HCT116 (cell line): ENCODE measurements at regions of chr18 and their contacts with region 1.

Region 1: GRCh38 chr18:45974088-45974536 is 7.0 kb upstream of the EPG5 start:
- DNase-seq: peak; percentile 63
- ATAC-seq: peak; percentile 86
- H3K4me3 ChIP-seq: peak overlapping the region; percentile 14 to 20; a peak in 3 of 4 replicates
- H3K27ac ChIP-seq: no peak overlapping the region
- H3K4me1 ChIP-seq: peaks cover 5 to 8% of the 10 kb centered on the region in 2 experiments; a peak in 3 of 4 replicates
- H3K27me3 ChIP-seq: no peaks in the 10 kb centered on the region
- CTCF ChIP-seq: peak; percentile 76 to 86 (median 78); a peak in 5 of 6 replicates
- POLR2A ChIP-seq: no peak
- RAD21 ChIP-seq: peak; percentile 89

Region 2: DNA sequence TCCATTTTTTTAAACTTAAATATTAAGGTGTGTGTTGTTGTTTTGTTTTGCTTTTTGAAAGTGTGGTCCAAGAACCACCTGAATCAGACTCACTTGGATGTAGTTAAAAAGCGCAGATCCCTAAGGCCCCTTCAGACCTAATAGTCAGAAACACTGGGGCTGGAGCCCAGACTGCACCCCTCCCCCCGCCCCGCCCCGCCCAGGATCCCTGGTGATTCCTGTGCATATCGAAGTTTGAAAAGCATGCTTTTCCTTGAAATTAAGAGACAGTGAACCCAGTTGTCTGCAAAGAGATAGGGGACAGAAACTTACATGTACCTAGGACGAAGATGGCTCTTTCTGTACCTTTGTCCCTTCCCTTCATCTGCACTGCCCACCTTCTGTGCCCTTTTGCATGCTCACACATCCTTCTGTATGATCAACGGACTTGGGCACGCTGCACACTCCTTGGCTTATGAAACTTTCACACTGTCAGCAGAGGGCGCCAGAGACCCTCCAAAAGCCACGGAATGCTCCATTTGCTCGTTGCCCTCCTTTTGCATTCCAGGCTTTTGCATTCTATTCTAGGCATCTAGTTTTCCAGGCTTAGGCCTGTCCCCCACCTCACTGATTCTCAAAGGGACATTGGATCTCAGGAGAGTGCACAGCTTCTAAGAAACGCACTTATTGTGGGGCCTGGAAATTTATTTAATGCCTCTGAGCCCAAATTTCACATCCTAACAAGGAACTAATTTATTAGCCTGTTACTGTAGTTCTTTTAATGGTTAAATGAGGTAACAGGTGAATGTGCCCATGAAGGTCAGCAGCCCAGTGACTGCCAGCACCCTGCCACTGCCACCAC is 282.9 kb before region 1 on chr18:
- CTCF ChIA-PET with region 1: interaction called, 3 read pairs
- POLR2A ChIA-PET with region 1: no interaction called
- RAD21 ChIA-PET with region 1: no interaction called
- intact Hi-C with region 1: loop called (anchors 1 kb)
- DNase-seq: peak; percentile 62
- ATAC-seq: peak; percentile 98
- H3K4me3 ChIP-seq: no peak overlapping the region
- H3K27ac ChIP-seq: no peak overlapping the region
- H3K4me1 ChIP-seq: peaks cover 0 to 5% of the 10 kb centered on the region in 2 experiments; a peak in 1 of 4 replicates
- H3K27me3 ChIP-seq: no peaks in the 10 kb centered on the region
- CTCF ChIP-seq: peak; percentile 79 to 91 (median 84)
- POLR2A ChIP-seq: no peak
- RAD21 ChIP-seq: peak; percentile 93

Region 3: GRCh38 chr18:45722899-45723298 is 251.2 kb before region 1 on chr18:
- CTCF ChIA-PET with region 1: no interaction called
- POLR2A ChIA-PET with region 1: no interaction called
- RAD21 ChIA-PET with region 1: no interaction called
- intact Hi-C with region 1: loop called (anchors 1 kb)
- DNase-seq: peak; percentile 57
- ATAC-seq: peak; percentile 100
- H3K4me3 ChIP-seq: no peak overlapping the region
- H3K27ac ChIP-seq: no peak overlapping the region
- H3K4me1 ChIP-seq: no peaks in the 10 kb centered on the region
- H3K27me3 ChIP-seq: 0 out of 2 replicates have a peak, but pooled peaks cover 6% of the 10 kb centered on the region
- CTCF ChIP-seq: peak; percentile 74 to 94 (median 78)
- POLR2A ChIP-seq: no peak
- RAD21 ChIP-seq: peak; percentile 82

Region 4: GRCh38 chr18:45920367-45920766 is 53.7 kb before region 1 on chr18:
- CTCF ChIA-PET with region 1: interaction called, 5 read pairs
- POLR2A ChIA-PET with region 1: no interaction called
- RAD21 ChIA-PET with region 1: no interaction called
- intact Hi-C with region 1: loop called (anchors 1 kb)
- DNase-seq: no peak
- ATAC-seq: no peak
- H3K4me3 ChIP-seq: no peak overlapping the region
- H3K27ac ChIP-seq: no peak overlapping the region
- H3K4me1 ChIP-seq: peaks cover 0 to 4% of the 10 kb centered on the region in 2 experiments; a peak in 1 of 4 replicates
- H3K27me3 ChIP-seq: no peaks in the 10 kb centered on the region
- CTCF ChIP-seq: no peak
- POLR2A ChIP-seq: no peak
- RAD21 ChIP-seq: no peak

Region 5: GRCh38 chr18:46073474-46074331 is 99.6 kb after region 1 on chr18:
- CTCF ChIA-PET with region 1: interaction called, 18 read pairs
- POLR2A ChIA-PET with region 1: no interaction called
- RAD21 ChIA-PET with region 1: interaction called in 1 of 2 experiments, 5 read pairs
- intact Hi-C with region 1: loop called (anchors 2 kb)
- DNase-seq: peak; percentile 51
- ATAC-seq: peak; percentile 41
- H3K4me3 ChIP-seq: no peak overlapping the region
- H3K27ac ChIP-seq: no peak overlapping the region
- H3K4me1 ChIP-seq: peaks cover 18 to 38% of the 10 kb centered on the region in 2 experiments
- H3K27me3 ChIP-seq: no peaks in the 10 kb centered on the region
- CTCF ChIP-seq: peak; percentile 48 to 68 (median 58); a peak in 5 of 6 replicates
- POLR2A ChIP-seq: no peak
- RAD21 ChIP-seq: peak; percentile 78

Region 6: DNA sequence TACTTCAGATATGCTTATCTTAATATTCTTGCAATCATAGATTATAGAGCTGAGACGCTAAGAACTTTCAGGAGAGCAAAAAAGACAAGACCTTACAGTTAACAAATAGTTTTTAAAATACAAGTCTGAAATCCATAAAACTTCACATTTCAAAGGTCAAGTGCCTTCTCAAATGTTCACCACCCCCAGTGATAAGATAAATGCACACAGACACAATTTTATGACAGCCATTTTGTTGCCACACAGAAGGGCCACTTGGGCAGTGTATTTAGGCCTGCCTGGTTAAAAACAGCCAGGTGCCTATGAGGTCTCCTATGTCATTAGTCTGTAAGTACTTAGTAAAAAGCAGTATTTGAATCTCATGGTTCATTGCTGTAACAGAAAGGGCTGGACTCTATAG is 106.0 kb after region 1 on chr18:
- CTCF ChIA-PET with region 1: no interaction called
- POLR2A ChIA-PET with region 1: no interaction called
- RAD21 ChIA-PET with region 1: interaction called in 1 of 2 experiments, 10 read pairs
- intact Hi-C with region 1: no loop called
- DNase-seq: no peak
- ATAC-seq: no peak
- H3K4me3 ChIP-seq: no peak overlapping the region
- H3K27ac ChIP-seq: no peak overlapping the region
- H3K4me1 ChIP-seq: no peaks in the 10 kb centered on the region
- H3K27me3 ChIP-seq: no peaks in the 10 kb centered on the region
- CTCF ChIP-seq: no peak
- POLR2A ChIP-seq: no peak
- RAD21 ChIP-seq: no peak